ENCODE measurements at regions of chr9 and their contacts with region 1.

Region 1: GRCh38 chr9:131739980-131740648 is at the start of gene RAPGEF1:
- DNase-seq: no peak

Region 2: DNA sequence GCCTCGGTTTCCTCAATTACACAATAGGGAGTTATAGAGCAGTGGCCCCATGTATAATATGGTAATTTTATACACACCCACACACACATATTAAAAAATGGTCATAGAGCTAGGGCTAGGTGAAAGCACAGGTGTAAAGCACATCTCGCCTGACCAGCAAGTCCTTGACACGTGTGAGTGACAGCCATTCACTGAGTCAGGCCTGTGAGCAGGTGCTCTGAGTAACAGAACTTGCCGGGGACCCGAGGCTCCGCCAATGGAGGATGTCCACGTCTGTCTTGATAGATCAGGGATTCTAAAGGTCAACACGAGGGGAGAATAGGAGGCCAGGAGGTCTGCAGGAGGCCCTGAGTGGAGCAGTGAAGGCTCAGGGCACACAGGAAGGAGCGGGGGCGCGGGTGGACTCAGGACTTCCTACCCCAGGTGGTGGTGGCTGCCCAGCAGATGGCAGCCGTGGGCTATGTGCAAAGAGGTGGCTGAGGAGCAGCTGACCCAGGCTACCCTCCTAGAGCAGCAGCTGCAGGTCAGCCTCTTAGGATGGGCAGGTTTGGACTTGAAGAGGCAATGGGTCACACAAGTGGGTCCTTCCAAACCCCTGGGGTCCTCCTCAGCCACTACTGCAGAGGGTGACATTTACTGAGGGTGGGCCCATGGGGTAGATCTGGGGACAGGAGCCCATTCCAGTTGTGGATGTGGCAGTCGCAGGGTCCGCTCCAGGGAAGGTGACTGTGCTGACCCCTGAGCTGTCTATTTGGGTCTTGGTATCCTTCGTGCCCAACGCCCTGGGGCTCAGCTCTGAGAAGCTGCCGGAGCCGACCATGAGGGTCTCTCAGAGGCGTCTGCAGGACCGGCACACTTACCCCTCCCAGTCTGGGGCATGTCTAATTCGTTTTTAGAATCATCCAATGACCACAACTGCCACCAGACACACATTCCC is 148.9 kb before region 1 on chr9:
- in situ Hi-C with region 1: loop called (anchors 25 kb)
- DNase-seq: peak; percentile 79